MCF 10A (cell line): ENCODE measurements at regions of chr7 and their contacts with region 1.

Region 1: DNA sequence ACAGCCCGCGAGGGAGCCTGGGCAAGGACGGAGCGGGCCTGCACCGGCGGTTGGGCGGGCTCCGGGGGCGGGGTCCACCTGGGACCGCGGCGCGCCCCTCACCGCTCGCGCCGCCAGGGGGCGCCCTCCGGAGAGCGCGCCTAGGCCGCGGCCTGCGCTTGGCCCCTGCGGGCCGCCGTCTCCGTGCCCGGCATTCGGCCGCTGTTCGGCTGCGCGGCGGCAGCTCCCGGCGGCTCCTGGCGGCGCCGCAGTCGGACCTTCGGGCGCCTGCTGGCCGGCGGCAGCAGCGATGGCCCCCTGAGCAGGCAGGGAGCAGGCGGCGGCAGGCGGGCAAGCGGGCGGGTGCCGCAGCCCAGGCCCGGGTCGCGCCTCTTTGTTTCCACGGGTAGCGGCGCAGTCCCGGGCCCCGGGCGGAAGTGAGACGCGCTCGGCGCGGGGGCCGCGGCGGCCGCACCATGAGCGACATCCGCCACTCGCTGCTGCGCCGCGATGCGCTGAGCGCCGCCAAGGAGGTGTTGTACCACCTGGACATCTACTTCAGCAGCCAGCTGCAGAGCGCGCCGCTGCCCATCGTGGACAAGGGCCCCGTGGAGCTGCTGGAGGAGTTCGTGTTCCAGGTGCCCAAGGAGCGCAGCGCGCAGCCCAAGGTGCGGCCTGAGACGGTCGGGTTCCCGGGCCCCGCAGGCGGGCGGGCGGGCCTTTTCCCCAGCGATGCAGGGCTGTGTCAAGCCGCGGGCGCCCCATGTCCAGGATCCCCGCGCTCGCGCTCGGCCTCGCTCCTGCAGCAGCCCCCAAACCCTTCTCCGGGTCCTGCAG is at the start of gene INTS15:
- DNase-seq: peak; percentile 73
- H3K4me3 Mint-ChIP-seq: peak within 1 kb of the TSS; percentile 99
- H3K27ac Mint-ChIP-seq: peak within 1 kb of the TSS; percentile 74
- H3K4me1 Mint-ChIP-seq: no peaks in the 10 kb centered on the region
- H3K27me3 Mint-ChIP-seq: no peaks in the 10 kb centered on the region
- CTCF ChIP-seq: peak; percentile 70
- total RNA-seq, gene INTS15: 25.4 and 26.5 TPM in 2 replicates

Region 2: DNA sequence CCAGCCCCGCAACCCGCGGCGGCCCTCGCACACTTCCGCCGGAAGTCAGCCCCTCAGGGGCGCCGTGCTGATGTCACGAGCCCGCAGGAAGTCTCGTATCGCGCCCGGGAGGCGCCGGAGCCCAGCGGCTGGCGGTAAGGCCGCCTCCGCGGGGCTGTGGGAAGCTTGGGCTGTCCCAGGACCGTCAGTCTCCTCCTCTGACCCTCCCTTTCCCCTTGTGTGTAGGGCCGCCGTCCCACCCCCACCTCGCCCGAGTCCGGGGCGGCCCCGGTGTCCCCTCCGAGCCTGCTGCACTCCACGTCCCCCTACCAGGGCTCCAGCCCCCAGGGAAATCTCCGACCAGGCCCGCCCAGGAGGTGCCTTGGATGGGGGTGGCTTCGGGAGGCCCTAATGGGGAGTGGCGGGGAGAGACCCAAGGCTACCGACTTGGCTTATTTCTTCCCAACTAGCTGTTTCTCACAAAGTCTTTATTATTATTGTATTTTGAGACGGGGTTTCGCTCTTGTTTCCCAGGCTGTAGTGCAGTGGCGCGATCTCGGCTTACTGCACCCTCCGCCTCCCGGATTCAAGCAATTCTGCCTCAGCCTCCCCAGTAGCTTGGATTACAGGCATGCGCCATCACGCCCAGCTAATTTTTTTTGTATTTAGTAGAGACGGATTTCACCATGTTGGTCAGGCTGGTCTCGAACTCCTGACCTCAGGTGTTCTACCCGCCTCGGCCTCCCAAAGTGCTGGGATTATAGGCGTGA is 12.5 kb before region 1 on chr7 and contains the start of gene ZDHHC4:
- CTCF ChIA-PET with region 1: interaction called, 15 read pairs
- POLR2A ChIA-PET with region 1: interaction called, 4 read pairs
- intact Hi-C with region 1: no loop called
- DNase-seq: peak; percentile 80
- H3K4me3 Mint-ChIP-seq: peak within 1 kb of the TSS; percentile 85
- H3K27ac Mint-ChIP-seq: peak within 1 kb of the TSS; percentile 95
- H3K4me1 Mint-ChIP-seq: peaks cover 10% of the 10 kb centered on the region
- H3K27me3 Mint-ChIP-seq: no peaks in the 10 kb centered on the region
- CTCF ChIP-seq: no peak
- total RNA-seq, gene ZDHHC4: 41.8 and 45.6 TPM in 2 replicates

Region 3: GRCh38 chr7:6637544-6638229 is 47.6 kb after region 1 on chr7:
- CTCF ChIA-PET with region 1: interaction called, 4 read pairs
- POLR2A ChIA-PET with region 1: interaction called, 7 read pairs
- intact Hi-C with region 1: loop called (anchors 2 kb)
- DNase-seq: peak; percentile 21
- H3K4me3 Mint-ChIP-seq: peak overlapping the region; percentile 73
- H3K27ac Mint-ChIP-seq: peak overlapping the region; percentile 70
- H3K4me1 Mint-ChIP-seq: peaks cover 16% of the 10 kb centered on the region
- H3K27me3 Mint-ChIP-seq: no peaks in the 10 kb centered on the region
- CTCF ChIP-seq: no peak